Activated CD4-positive, alpha-beta T cell treated with anti-CD3 and anti-CD28 coated beads for 36 hours (primary cell): ENCODE measurements at regions of chr16 and their contacts with region 1.

Region 1: GRCh38 chr16:29862884-29863668 is at the start of gene CDIPT:
- DNase-seq: peak; percentile 96
- ATAC-seq: peak; percentile 99
- H3K4me3 Mint-ChIP-seq: peak within 1 kb of the TSS; percentile 90
- H3K27ac Mint-ChIP-seq: peak within 1 kb of the TSS; percentile 98
- H3K4me1 Mint-ChIP-seq: peaks cover 18% of the 10 kb centered on the region
- H3K27me3 Mint-ChIP-seq: no peaks in the 10 kb centered on the region
- total RNA-seq, gene CDIPT: 35.1 to 50.0 TPM

Region 2: GRCh38 chr16:28950648-28951409 is 912.2 kb before region 1 on chr16 and contains the start of gene NFATC2IP:
- CTCF ChIA-PET with region 1: no interaction called
- POLR2A ChIA-PET with region 1: no interaction called
- intact Hi-C with region 1: loop called in 1 of 2 experiments (anchors 1 kb)
- DNase-seq: peak; percentile 100
- ATAC-seq: peak; percentile 98
- H3K4me3 Mint-ChIP-seq: peak within 1 kb of the TSS; percentile 98
- H3K27ac Mint-ChIP-seq: peak within 1 kb of the TSS; percentile 89
- H3K4me1 Mint-ChIP-seq: peaks cover 24% of the 10 kb centered on the region
- H3K27me3 Mint-ChIP-seq: no peaks in the 10 kb centered on the region
- total RNA-seq, gene NFATC2IP: 69.2 to 72.7 TPM

Region 3: DNA sequence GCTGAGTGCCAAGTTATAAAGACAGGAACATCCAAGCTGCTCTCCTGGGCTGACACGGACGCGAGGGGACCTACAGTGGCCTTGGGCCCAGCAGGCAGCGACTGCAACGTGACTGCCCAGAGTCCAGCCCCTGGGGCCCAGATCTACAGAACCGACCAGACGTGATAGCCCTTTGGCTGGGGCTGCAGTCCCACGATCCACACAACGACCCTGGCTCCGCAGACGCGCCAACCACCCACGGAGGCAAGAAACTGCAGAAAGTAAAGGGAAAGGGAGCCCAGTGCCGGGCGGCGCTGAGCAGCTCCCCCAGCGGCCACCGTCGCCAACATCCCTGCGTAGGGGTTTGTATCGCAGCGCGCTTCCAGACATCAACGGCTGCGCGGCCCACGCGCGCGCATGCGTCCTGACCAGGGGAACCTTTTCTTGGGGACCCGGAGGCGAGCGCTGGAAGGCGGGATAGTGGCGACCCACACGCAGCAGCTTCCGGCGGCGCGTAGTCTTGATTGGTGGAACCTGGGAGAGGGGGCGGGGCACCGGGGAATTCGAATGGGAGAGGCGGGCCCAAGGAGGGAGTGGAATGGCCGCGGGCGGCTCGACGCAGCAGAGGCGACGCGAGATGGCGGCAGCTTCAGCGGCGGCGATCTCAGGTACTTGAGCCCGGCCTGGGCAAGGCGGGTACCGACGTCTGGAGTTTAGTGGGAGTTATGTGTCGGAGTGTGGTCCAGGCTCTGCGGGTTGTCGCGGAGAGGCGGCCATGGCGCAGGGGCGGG is 72.7 kb before region 1 on chr16 and contains the start of gene KIF22:
- CTCF ChIA-PET with region 1: interaction called, 3 read pairs
- POLR2A ChIA-PET with region 1: no interaction called
- intact Hi-C with region 1: loop called in 1 of 2 experiments (anchors 1 kb)
- DNase-seq: peak; percentile 100
- ATAC-seq: peak; percentile 95
- H3K4me3 Mint-ChIP-seq: peak within 1 kb of the TSS; percentile 91
- H3K27ac Mint-ChIP-seq: peak within 1 kb of the TSS; percentile 97
- H3K4me1 Mint-ChIP-seq: peaks cover 30% of the 10 kb centered on the region
- H3K27me3 Mint-ChIP-seq: no peaks in the 10 kb centered on the region
- total RNA-seq, gene KIF22: 153 to 168 TPM

Region 4: GRCh38 chr16:29825145-29826044 is 37.7 kb before region 1 on chr16:
- CTCF ChIA-PET with region 1: interaction called, 4 read pairs
- POLR2A ChIA-PET with region 1: no interaction called
- intact Hi-C with region 1: loop called in 1 of 2 experiments (anchors 1 kb)
- DNase-seq: peak; percentile 72
- ATAC-seq: peak; percentile 57
- H3K4me3 Mint-ChIP-seq: peak overlapping the region; percentile 53
- H3K27ac Mint-ChIP-seq: peak overlapping the region; percentile 91
- H3K4me1 Mint-ChIP-seq: peaks cover 78% of the 10 kb centered on the region
- H3K27me3 Mint-ChIP-seq: no peaks in the 10 kb centered on the region

Region 5: GRCh38 chr16:29926005-29926710 is 63.1 kb after region 1 on chr16 and contains the start of gene KCTD13:
- CTCF ChIA-PET with region 1: interaction called, 4 read pairs
- POLR2A ChIA-PET with region 1: no interaction called
- intact Hi-C with region 1: loop called (anchors 1 kb)
- DNase-seq: peak; percentile 92
- ATAC-seq: peak; percentile 90
- H3K4me3 Mint-ChIP-seq: peak within 1 kb of the TSS; percentile 82
- H3K27ac Mint-ChIP-seq: peak within 1 kb of the TSS; percentile 95
- H3K4me1 Mint-ChIP-seq: peaks cover 32% of the 10 kb centered on the region
- H3K27me3 Mint-ChIP-seq: no peaks in the 10 kb centered on the region
- total RNA-seq, gene KCTD13: 30.4 to 33.4 TPM

Region 6: DNA sequence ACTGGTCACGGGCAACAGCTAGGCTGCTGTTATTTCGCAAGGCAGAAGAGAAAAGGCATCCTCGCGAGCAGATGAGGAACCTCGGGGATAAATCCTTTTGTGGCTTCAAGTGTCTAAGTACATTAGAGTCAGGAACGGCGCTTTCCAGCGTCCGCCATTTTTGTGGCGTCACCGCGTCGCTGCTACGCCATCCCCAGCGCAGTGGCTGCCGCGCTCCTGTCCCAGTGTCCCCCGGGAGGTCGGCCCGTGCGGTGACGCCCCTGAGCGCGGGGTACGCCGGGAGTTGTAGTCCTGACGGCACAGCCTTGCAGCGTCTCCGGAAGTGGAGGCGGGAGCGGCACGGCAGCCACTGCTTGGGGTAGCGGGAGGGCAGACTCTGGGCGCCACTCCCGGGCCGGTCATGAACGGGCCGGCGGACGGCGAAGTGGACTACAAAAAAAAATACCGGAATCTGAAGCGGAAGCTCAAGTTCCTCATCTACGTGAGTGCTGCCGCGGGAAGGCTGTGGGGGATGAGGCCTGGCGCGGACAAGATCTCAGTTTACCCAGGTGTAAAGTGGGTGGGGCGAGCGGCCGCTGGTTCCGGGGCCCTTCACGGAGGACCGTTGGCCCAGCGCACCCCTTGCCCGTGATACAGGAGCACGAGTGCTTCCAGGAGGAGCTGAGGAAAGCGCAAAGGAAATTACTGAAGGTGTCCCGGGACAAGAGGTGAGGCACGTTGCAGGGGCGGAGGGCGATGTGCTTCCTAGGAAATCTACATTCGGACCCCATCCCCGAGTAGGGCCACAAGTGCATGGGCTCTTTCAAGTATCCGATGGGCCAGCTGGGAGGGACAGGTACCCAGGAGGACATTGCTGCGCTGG is 133.1 kb after region 1 on chr16 and contains the start of gene INO80E:
- CTCF ChIA-PET with region 1: no interaction called
- POLR2A ChIA-PET with region 1: no interaction called
- intact Hi-C with region 1: loop called (anchors 1 kb)
- DNase-seq: peak; percentile 100
- ATAC-seq: peak; percentile 98
- H3K4me3 Mint-ChIP-seq: peak within 1 kb of the TSS; percentile 96
- H3K27ac Mint-ChIP-seq: peak within 1 kb of the TSS; percentile 98
- H3K4me1 Mint-ChIP-seq: peaks cover 25% of the 10 kb centered on the region
- H3K27me3 Mint-ChIP-seq: no peaks in the 10 kb centered on the region
- total RNA-seq, gene INO80E: 80.1 to 106 TPM

Region 7: GRCh38 chr16:30041846-30042267 is 178.8 kb after region 1 on chr16:
- CTCF ChIA-PET with region 1: no interaction called
- POLR2A ChIA-PET with region 1: no interaction called
- intact Hi-C with region 1: no loop called
- DNase-seq: no peak
- ATAC-seq: no peak
- H3K4me3 Mint-ChIP-seq: no peak overlapping the region
- H3K27ac Mint-ChIP-seq: no peak overlapping the region
- H3K4me1 Mint-ChIP-seq: no peaks in the 10 kb centered on the region
- H3K27me3 Mint-ChIP-seq: peaks cover 2% of the 10 kb centered on the region